Ovary (tissue), 10 donors: ENCODE measurements at regions of chr9 and their contacts with region 1.

Region 1: GRCh38 chr9:134419684-134420076 is 93.4 kb downstream of the RXRA start:
- DNase-seq: no peak
- H3K4me3 ChIP-seq: no peak overlapping the region
- H3K27ac ChIP-seq: peak overlapping the region in 1 of 2 donors; percentile 60
- H3K4me1 ChIP-seq: peaks cover 48% of the 10 kb centered on the region
- H3K27me3 ChIP-seq: no peaks in the 10 kb centered on the region
- CTCF ChIP-seq: peak in 1 of 3 donors; percentile 12
- EP300 ChIP-seq: no peak
- POLR2A ChIP-seq: no peak

Region 2: DNA sequence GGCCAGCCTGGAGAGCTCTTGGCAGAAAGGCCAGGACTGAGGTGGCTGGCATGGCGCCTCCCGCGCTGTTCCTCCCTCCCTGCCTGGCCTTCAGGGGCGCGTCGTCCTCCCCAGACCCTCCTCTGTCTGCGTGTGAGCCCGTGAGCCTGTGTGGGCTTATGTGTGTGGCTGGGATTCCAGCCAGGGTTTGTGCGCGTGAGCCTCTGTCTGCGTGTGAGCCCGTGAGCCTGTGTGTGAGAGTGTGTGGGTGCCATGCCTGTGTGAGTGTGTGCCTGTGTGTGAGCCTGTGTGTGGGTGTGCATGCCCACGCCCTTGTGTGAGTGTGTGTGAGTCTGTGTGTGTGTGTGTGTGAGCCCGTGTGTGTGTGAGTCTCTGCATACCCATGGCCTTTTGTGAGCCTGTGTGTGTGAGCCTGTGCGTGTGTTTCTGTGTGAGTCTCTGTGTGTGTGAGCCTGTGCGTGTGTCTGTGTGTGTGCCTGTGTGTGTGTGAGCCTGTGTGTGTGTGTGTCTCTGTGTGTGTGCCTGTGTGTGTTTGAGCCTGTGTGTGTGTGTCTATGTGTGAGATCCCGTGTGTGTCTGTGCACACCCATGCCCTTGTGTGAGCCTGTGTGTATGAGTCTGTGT is 80.4 kb before region 1 on chr9:
- intact Hi-C with region 1: loop called in 2 of 4 experiments (anchors 5 to 10 kb)
- DNase-seq: peak in 4 of 5 donors; percentile 55 to 80 (median 68)
- H3K4me3 ChIP-seq: peak overlapping the region; percentile 1
- H3K27ac ChIP-seq: peak overlapping the region in 1 of 2 donors; percentile 64
- H3K4me1 ChIP-seq: peaks cover 79% of the 10 kb centered on the region
- H3K27me3 ChIP-seq: no peaks in the 10 kb centered on the region
- CTCF ChIP-seq: no peak
- EP300 ChIP-seq: no peak
- POLR2A ChIP-seq: no peak

Region 3: GRCh38 chr9:134378901-134379338 is 40.8 kb before region 1 on chr9:
- intact Hi-C with region 1: loop called in 1 of 4 experiments (anchors 5 kb)
- DNase-seq: peak in 2 of 5 donors; percentile 56 to 64
- H3K4me3 ChIP-seq: no peak overlapping the region
- H3K27ac ChIP-seq: peak overlapping the region in 1 of 2 donors; percentile 45
- H3K4me1 ChIP-seq: peaks cover 71% of the 10 kb centered on the region
- H3K27me3 ChIP-seq: no peaks in the 10 kb centered on the region
- CTCF ChIP-seq: no peak
- EP300 ChIP-seq: no peak
- POLR2A ChIP-seq: no peak